ENCODE measurements at regions of chr17 and their contacts with region 1.

Region 1: DNA sequence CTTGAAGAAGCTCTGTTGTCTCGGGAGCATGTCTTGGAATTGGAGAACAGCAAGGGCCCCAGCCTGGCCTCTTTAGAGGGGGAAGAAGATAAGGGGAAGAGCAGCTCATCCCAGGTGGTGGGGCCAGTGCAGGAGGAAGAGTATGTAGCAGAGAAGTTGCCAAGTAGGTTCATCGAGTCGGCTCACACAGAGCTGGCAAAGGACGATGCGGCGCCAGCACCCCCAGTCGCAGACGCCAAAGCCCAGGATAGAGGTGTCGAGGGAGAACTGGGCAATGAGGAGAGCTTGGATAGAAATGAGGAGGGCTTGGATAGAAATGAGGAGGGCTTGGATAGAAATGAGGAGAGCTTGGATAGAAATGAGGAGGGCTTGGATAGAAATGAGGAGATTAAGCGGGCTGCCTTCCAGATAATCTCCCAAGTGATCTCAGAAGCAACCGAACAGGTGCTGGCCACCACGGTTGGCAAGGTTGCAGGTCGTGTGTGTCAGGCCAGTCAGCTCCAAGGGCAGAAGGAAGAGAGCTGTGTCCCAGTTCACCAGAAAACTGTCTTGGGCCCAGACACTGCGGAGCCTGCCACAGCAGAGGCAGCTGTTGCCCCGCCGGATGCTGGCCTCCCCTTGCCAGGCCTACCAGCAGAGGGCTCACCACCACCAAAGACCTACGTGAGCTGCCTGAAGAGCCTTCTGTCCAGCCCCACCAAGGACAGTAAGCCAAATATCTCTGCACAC is 21.2 kb downstream of the AKAP1 start:
- DNase-seq: no peak
- H3K4me3 ChIP-seq: no peak overlapping the region
- H3K27ac ChIP-seq: peak overlapping the region; percentile 90 to 91
- H3K4me1 ChIP-seq: peaks cover 21 to 47% of the 10 kb centered on the region in 2 donors
- H3K27me3 ChIP-seq: no peaks in the 10 kb centered on the region
- CTCF ChIP-seq: peak in 2 of 3 experiments; percentile 23 to 25

Region 2: GRCh38 chr17:57092171-57092570 is 14.1 kb before region 1 on chr17:
- intact Hi-C with region 1: loop called (anchors 2 kb)
- DNase-seq: peak; percentile 61 to 91
- H3K4me3 ChIP-seq: peak overlapping the region in 1 of 2 donors; percentile 46
- H3K27ac ChIP-seq: peak overlapping the region; percentile 98
- H3K4me1 ChIP-seq: peaks cover 18 to 63% of the 10 kb centered on the region in 2 donors
- H3K27me3 ChIP-seq: no peaks in the 10 kb centered on the region
- CTCF ChIP-seq: no peak

Region 3: GRCh38 chr17:57370037-57370581 is 263.8 kb after region 1 on chr17:
- intact Hi-C with region 1: no loop called
- DNase-seq: no peak
- H3K4me3 ChIP-seq: no peak overlapping the region
- H3K27ac ChIP-seq: no peak overlapping the region
- H3K4me1 ChIP-seq: peaks cover 0 to 14% of the 10 kb centered on the region in 2 donors
- H3K27me3 ChIP-seq: no peaks in the 10 kb centered on the region
- CTCF ChIP-seq: no peak